SK-N-SH (cell line): ENCODE measurements at regions of chr4 and their contacts with region 1.

Region 1: GRCh38 chr4:140626661-140627376 is 58.1 kb upstream of the UCP1 start:
- DNase-seq: peak; percentile 40
- H3K4me3 ChIP-seq: no peak overlapping the region
- H3K27ac ChIP-seq: peak overlapping the region in 1 of 2 experiments; percentile 34; a peak in 2 of 4 replicates
- H3K4me1 ChIP-seq: no peaks in the 10 kb centered on the region; a peak in 1 of 4 replicates
- H3K27me3 ChIP-seq: no peaks in the 10 kb centered on the region
- CTCF ChIP-seq: peak; percentile 37; the same call in 1 of the 2 replicates
- EP300 ChIP-seq: no peak
- RAD21 ChIP-seq: peak; percentile 70

Region 2: DNA sequence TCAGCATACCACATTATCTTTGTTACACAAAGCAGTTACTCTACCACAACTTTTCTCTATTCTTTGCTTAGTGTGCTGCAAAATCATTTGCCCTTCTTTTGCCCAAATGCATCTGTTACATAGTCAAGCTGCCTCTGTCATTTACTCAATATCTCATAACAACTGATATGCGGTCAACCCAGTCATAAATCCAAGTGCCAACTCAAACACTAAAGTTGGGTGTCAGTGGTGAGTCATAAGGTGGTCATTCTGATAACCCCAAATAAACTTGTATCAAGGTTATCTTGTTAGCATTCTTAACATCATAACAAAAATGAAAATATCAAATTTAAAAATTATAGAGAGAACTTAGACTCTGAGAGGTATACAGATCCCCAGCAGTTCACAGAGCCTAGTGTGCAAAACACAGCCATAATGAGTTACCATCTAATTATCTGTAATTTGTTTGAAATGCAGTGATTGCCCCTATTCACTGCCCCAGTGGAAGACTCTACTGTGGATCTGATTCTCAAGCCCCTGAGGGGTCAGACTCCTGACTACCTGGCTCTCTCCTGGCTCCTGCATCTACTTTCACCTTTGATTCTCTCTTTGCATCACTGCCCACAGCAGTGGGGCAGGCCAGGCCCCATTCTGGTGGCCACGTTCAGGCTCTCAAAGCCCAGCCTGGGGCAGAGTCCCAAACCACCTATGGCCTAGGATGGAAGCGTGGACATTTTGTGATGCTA is 100.1 kb after region 1 on chr4:
- CTCF ChIA-PET with region 1: no interaction called
- POLR2A ChIA-PET with region 1: no interaction called
- DNase-seq: no peak
- H3K4me3 ChIP-seq: no peak overlapping the region
- H3K27ac ChIP-seq: peak overlapping the region; percentile 47 to 56
- H3K4me1 ChIP-seq: peaks cover 3 to 19% of the 10 kb centered on the region in 2 experiments; a peak in 2 of 4 replicates
- H3K27me3 ChIP-seq: no peaks in the 10 kb centered on the region
- CTCF ChIP-seq: no peak
- EP300 ChIP-seq: peak in 1 of 2 experiments; percentile 42; a peak in 1 of 4 replicates
- RAD21 ChIP-seq: no peak

Region 3: DNA sequence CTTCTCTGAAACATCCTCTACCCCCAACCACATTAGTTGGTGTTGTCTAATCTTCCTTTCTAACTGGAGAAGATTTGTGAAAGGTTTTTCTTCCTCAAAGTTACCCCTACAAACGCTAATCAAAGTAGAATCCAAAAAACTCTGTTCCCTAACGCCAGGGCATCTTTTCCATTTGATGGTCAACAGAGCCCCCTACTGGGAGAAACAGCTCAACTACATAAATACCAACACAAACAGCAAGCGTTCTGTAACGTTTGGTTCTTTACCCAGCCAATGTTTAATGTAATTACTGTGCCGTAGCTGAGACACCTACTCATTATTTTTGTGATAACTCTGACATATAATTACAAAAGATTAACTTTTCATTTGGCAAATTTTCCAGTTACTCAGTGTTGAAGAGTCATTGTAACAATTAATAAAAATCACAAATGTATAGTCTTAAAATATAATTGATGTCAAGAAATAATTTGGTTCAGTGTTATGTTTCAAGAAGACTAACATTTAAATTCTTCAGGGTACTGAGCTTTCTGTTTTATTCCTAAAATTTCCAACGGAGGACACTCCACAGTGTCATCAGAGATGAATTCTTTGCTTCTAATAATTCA is 224.3 kb after region 1 on chr4:
- CTCF ChIA-PET with region 1: interaction called, 12 read pairs
- POLR2A ChIA-PET with region 1: no interaction called
- DNase-seq: peak; percentile 54
- H3K4me3 ChIP-seq: no peak overlapping the region
- H3K27ac ChIP-seq: no peak overlapping the region
- H3K4me1 ChIP-seq: no peaks in the 10 kb centered on the region; a peak in 1 of 4 replicates
- H3K27me3 ChIP-seq: no peaks in the 10 kb centered on the region
- CTCF ChIP-seq: peak; percentile 95
- EP300 ChIP-seq: no peak
- RAD21 ChIP-seq: peak; percentile 98